ENCODE measurements at regions of chr9 and their contacts with region 1.

Region 1: DNA sequence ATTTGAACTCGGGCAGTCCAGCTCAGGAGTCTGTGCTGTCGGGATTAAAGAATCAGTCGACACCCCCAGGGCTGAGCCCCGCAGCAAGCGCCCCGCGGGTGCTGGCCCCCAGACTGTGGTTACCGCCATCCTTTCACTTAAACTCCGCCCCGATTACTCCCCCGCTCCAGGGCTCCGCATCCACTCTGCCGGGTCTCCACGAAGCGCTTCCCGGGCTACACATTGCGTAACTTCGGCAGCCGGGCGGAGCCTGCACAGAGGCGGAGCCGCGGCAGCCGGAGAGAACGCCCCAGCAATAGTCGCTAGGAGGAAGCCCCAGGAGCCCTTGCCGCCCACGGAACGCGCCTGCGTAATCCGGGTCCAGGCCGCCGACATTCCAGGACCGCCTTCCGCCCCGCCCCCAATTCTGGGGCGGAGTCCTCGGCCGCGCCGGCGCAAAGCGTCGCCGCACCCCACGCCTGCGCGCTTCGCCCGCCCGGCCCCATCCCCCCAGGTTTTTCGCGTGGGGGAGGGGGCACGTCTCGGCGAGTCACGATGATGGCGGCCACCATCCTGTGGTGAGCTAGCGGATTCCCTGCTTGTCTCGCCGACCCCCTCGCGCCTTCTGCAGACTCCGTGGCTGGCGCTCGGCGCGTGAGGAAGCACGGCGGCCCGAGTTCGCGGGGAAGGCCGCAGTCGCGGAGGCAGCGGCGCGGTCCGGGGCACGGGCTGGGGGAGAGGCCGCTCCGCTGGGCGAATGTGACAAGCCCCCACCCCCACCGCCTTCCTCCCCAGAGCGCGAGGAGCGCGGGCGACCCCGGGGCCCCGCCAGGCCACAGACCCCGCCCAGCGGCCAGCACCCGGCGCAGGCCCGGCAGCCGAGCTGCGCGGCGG is at the start of gene RAD23B:
- DNase-seq: peak; percentile 99
- H3K4me3 ChIP-seq: peak within 1 kb of the TSS; percentile 54 to 93 (median 92)
- H3K27ac ChIP-seq: peak within 1 kb of the TSS; percentile 82
- H3K4me1 ChIP-seq: peaks cover 14% of the 10 kb centered on the region
- H3K27me3 ChIP-seq: no peaks in the 10 kb centered on the region
- CTCF ChIP-seq: no peak
- POLR2A ChIP-seq: peak; percentile 73
- total RNA-seq, gene RAD23B: 100 and 102 TPM in 2 replicates

Region 2: DNA sequence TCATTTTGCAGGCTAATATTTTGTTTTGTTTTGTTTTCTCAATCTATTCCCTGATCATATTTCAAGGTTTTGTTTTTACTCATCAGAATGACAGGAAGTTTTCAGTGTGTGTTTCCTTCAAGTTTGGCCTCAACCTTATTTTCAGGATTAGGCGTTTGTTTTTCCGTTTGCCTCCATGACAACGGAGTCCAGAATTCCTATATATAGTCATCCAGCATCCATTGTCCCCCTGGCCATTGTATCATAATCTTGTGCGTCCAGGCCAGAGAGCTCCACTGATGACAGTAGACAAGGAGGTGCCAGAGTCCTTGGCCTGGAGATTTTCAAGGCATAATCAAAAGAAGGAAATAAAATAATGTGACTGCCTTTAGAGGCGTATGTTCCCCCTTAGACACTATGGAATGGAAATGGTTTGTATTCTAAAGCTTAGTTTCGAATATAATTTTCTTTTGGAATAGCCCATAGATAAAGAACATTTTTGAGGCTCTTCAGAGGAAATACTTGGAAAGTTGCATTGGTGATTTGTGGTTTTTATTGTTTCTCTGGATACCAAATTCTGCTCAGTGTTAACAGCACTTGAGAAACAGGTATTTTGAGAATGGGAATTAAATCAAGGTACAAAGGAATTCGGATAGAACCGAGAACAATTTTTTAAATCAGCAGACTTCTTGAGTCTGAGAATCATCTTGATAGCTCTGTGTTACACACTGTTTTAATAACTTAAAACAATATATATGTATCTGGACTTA is 320.2 kb before region 1 on chr9:
- CTCF ChIA-PET with region 1: no interaction called
- POLR2A ChIA-PET with region 1: no interaction called
- dilution Hi-C with region 1: no loop called
- intact Hi-C with region 1: loop called (anchors 2 kb)
- DNase-seq: peak; percentile 97
- H3K4me3 ChIP-seq: no peak overlapping the region
- H3K27ac ChIP-seq: peak overlapping the region; percentile 81
- H3K4me1 ChIP-seq: peaks cover 21% of the 10 kb centered on the region
- H3K27me3 ChIP-seq: no peaks in the 10 kb centered on the region
- CTCF ChIP-seq: no peak
- POLR2A ChIP-seq: no peak

Region 3: DNA sequence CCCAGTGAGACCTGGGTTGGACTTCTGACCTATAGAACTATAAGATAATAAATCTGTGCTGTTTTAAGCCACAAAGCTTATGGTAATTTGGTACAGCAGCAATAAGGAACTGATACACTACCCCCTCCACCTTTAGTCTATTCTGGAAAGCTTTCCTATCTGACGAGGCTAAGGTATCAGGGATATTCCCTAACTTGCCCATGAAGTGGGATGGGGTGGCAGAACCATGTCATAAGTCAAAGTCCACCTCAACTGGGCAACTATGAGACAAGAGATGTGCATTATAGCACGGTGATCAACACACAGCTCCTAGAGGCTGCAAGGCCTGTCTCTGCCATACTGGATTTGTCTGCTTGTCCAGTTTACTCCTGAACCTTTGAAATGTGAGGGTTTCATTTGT is 146.7 kb before region 1 on chr9:
- CTCF ChIA-PET with region 1: no interaction called
- POLR2A ChIA-PET with region 1: no interaction called
- dilution Hi-C with region 1: no loop called
- intact Hi-C with region 1: no loop called
- DNase-seq: no peak
- H3K4me3 ChIP-seq: no peak overlapping the region
- H3K27ac ChIP-seq: no peak overlapping the region
- H3K4me1 ChIP-seq: no peaks in the 10 kb centered on the region
- H3K27me3 ChIP-seq: no peaks in the 10 kb centered on the region
- CTCF ChIP-seq: no peak
- POLR2A ChIP-seq: no peak

Region 4: GRCh38 chr9:107251756-107252322 is 31.1 kb before region 1 on chr9:
- CTCF ChIA-PET with region 1: no interaction called
- POLR2A ChIA-PET with region 1: no interaction called
- dilution Hi-C with region 1: no loop called
- intact Hi-C with region 1: no loop called
- DNase-seq: no peak
- H3K4me3 ChIP-seq: no peak overlapping the region
- H3K27ac ChIP-seq: no peak overlapping the region
- H3K4me1 ChIP-seq: no peaks in the 10 kb centered on the region
- H3K27me3 ChIP-seq: peaks cover 6% of the 10 kb centered on the region in 2 experiments
- CTCF ChIP-seq: no peak
- POLR2A ChIP-seq: no peak

Region 5: DNA sequence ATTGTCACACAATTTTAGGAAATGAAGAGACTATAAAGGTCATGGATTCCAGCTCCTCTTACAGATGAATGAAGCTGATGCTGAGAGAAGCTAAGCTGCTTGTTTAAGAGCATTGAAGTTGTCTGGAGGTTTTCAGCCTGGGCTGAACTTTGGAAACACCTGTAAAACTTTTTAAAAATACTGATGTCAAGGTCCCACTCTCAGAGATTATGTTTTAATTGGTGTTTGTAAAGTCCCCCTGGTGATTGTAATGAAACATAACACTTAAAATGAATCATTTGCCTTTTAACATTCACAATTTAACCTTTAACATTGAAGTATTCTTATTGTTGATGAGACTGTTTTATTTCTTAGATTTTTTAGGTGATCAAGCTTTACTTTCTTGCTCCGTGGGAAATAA is 16.4 kb after region 1 on chr9:
- CTCF ChIA-PET with region 1: interaction called, 6 read pairs
- POLR2A ChIA-PET with region 1: no interaction called
- dilution Hi-C with region 1: no loop called
- intact Hi-C with region 1: loop called (anchors 1 kb)
- DNase-seq: peak; percentile 33
- H3K4me3 ChIP-seq: no peak overlapping the region
- H3K27ac ChIP-seq: peak overlapping the region; percentile 35
- H3K4me1 ChIP-seq: peaks cover 26% of the 10 kb centered on the region
- H3K27me3 ChIP-seq: no peaks in the 10 kb centered on the region
- CTCF ChIP-seq: no peak
- POLR2A ChIP-seq: no peak

Region 6: GRCh38 chr9:107340920-107341632 is 58.1 kb after region 1 on chr9:
- CTCF ChIA-PET with region 1: interaction called, 11 read pairs
- POLR2A ChIA-PET with region 1: no interaction called
- dilution Hi-C with region 1: no loop called
- intact Hi-C with region 1: loop called (anchors 1 kb)
- DNase-seq: peak; percentile 48
- H3K4me3 ChIP-seq: no peak overlapping the region
- H3K27ac ChIP-seq: no peak overlapping the region
- H3K4me1 ChIP-seq: no peaks in the 10 kb centered on the region
- H3K27me3 ChIP-seq: no peaks in the 10 kb centered on the region
- CTCF ChIP-seq: peak; percentile 81 to 86
- POLR2A ChIP-seq: no peak

Region 7: DNA sequence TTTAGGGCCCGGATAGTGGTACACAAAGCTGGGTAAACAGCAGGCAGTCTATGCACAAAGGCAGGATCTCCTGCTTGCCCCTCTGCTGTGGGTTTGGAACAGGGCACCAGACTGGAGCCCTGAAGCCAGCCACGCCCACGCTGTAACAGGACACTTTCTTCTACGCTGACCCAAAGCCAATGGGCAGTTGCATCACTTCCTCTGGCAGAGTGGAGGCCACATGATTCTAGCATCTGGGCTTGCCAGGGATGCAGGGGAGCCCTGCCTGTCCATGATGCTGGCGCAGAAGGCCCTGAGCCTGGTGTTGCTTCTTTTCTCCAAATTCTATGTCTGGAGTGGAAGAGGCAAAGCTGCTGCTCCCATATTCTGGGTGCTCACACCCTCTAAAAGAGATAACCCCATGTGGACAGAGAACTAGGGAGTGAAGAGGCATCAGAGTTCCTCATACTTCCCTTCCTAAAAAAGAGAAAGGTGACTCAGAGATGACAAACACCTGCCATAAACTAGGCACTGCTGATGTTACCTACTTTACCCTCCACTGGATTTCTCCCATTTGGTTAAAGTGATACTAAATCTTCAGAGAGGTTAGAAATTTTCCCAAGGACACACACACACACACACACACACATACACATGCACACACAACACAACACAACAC is 466.9 kb after region 1 on chr9:
- CTCF ChIA-PET with region 1: no interaction called
- POLR2A ChIA-PET with region 1: no interaction called
- dilution Hi-C with region 1: no loop called
- intact Hi-C with region 1: loop called (anchors 1 kb)
- DNase-seq: peak; percentile 84
- H3K4me3 ChIP-seq: no peak overlapping the region
- H3K27ac ChIP-seq: peak overlapping the region; percentile 60
- H3K4me1 ChIP-seq: peaks cover 46% of the 10 kb centered on the region
- H3K27me3 ChIP-seq: no peaks in the 10 kb centered on the region
- CTCF ChIP-seq: no peak
- POLR2A ChIP-seq: peak; percentile 7

Region 8: DNA sequence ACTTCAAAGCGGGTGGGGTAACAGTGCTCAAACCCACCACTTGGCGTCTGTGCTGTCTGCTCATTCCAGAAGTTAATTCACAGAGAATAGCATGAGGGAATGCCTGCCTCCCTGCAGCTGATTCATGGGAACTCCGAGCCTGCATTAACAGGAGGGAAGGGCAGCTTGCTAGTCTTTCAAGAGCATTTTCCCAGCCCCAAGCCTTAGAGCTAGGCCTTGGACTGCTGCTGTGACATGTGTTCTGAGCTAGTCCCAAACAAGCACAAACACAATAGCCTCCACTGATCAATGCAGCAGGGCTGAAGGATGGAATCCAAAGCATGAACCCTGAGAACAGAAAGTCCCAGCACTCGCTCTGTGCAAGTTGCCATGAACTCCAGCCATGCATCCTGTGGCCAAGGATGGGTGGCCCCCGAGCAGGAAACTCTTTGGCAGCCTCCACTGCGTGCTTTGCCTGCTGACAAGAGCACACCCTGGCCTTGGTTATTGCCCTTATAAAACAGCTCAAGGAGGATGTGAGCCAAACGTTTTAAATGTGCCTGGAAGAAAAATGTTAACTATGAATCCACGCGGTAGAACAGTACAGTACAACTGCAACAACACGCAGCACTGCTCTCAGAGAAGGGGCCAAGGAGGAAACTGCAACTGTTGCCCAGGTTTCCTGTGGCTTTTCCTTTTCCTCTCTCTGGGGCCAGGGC is 859.7 kb after region 1 on chr9:
- CTCF ChIA-PET with region 1: no interaction called
- POLR2A ChIA-PET with region 1: no interaction called
- dilution Hi-C with region 1: no loop called
- intact Hi-C with region 1: loop called (anchors 10 kb)
- DNase-seq: peak; percentile 89
- H3K4me3 ChIP-seq: no peak overlapping the region
- H3K27ac ChIP-seq: peak overlapping the region; percentile 19
- H3K4me1 ChIP-seq: peaks cover 20% of the 10 kb centered on the region
- H3K27me3 ChIP-seq: no peaks in the 10 kb centered on the region
- CTCF ChIP-seq: peak; percentile 3 to 26
- POLR2A ChIP-seq: no peak

Region 9: GRCh38 chr9:109098171-109098959 is 1815.4 kb after region 1 on chr9:
- CTCF ChIA-PET with region 1: no interaction called
- POLR2A ChIA-PET with region 1: no interaction called
- dilution Hi-C with region 1: no loop called
- intact Hi-C with region 1: loop called (anchors 10 kb)
- DNase-seq: peak; percentile 97
- H3K4me3 ChIP-seq: peak overlapping the region in 1 of 3 experiments; percentile 21
- H3K27ac ChIP-seq: peak overlapping the region; percentile 52
- H3K4me1 ChIP-seq: peaks cover 54% of the 10 kb centered on the region
- H3K27me3 ChIP-seq: no peaks in the 10 kb centered on the region
- CTCF ChIP-seq: peak; percentile 19 to 33
- POLR2A ChIP-seq: no peak